Posterior vena cava (tissue), 2 donors: ENCODE measurements at regions of chr5 and their contacts with region 1.

Region 1: DNA sequence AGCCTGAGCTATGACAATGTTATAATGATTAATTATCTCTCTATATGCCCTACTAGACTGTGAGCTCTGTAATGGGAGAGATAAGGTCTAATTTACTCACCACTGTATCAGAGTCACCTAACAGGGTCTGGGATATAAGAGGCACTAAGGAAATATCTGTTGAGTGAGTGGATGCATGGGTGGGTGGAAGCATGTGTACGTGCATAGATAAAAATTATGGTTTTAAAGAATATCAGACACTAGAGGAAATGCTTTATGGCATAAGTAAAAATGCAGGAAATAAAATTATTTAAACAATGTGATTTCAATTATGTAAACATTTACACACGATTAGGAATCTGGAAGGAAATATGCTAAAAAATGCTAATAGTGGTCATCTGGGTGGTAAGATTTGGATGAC is 137.8 kb downstream of the SPOCK1 start:
- DNase-seq: no peak

Region 2: GRCh38 chr5:135364421-135365262 is 1996.6 kb before region 1 on chr5:
- intact Hi-C with region 1: loop called in 1 of 2 experiments (anchors 10 kb)
- DNase-seq: no peak

Region 3: DNA sequence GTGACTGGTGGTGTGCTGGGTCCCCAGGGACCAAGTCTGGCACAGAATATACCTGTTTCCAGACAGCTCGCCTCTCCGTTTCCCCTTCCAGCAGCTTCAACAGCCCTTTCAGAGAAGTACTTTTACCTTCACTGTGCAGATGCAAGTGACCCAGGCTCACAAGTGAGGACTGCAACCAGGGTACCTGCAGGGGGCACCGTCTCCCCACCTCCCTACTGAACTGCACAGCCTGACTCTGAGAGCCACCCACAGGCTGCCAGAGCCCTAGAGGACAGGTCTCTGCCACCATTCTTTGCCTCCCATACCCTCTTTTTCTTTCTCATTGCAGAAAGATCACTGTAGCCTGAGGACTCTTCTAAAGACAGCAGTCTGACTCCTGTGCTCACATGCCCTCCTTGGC is 1481.0 kb before region 1 on chr5:
- intact Hi-C with region 1: loop called in 1 of 2 experiments (anchors 5 kb)
- DNase-seq: no peak

Region 4: GRCh38 chr5:137072361-137073115 is 288.7 kb before region 1 on chr5:
- intact Hi-C with region 1: no loop called
- DNase-seq: no peak